Naive thymus-derived CD4-positive, alpha-beta T cell (primary cell): ENCODE measurements at regions of chr9 and their contacts with region 1.

Region 1: DNA sequence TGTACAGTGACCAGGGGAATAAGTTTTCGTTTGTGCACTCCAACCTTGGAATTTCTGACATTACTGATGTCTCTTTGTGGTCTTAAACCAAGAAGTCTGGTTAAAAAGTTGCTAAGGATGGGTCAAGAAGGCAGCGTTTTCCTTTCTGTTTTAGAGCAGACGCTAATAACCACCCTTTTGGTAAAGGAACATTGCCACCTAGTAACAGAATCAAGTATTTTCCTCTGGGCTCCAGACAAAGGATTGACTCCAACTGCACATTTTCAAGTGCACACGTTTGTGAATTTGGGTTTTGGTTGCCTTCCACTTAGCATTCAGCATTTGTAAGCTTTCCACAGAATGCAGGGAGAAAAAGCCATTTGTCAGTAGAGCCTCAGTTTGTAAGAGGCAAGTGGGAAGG is 22.2 kb upstream of the CEP78 start:
- DNase-seq: peak in 6 of 9 donors; percentile 12 to 54 (median 40)
- ATAC-seq: peak; percentile 65
- H3K4me3 ChIP-seq: no peak overlapping the region
- H3K4me3 Mint-ChIP-seq: peak overlapping the region in 3 of 10 donors; percentile 16 to 61 (median 46)
- H3K27ac ChIP-seq: no peak overlapping the region
- H3K27ac Mint-ChIP-seq: peak overlapping the region in 4 of 9 donors; percentile 30 to 89 (median 74)
- H3K4me1 ChIP-seq: peaks cover 34 to 38% of the 10 kb centered on the region in 2 donors
- H3K4me1 Mint-ChIP-seq: peaks cover 17 to 51% (median 44%) of the 10 kb centered on the region in 7 donors
- H3K27me3 ChIP-seq: no peaks in the 10 kb centered on the region
- H3K27me3 Mint-ChIP-seq: peaks cover 0 to under 1% (median 0%) of the 10 kb centered on the region in 5 donors

Region 2: DNA sequence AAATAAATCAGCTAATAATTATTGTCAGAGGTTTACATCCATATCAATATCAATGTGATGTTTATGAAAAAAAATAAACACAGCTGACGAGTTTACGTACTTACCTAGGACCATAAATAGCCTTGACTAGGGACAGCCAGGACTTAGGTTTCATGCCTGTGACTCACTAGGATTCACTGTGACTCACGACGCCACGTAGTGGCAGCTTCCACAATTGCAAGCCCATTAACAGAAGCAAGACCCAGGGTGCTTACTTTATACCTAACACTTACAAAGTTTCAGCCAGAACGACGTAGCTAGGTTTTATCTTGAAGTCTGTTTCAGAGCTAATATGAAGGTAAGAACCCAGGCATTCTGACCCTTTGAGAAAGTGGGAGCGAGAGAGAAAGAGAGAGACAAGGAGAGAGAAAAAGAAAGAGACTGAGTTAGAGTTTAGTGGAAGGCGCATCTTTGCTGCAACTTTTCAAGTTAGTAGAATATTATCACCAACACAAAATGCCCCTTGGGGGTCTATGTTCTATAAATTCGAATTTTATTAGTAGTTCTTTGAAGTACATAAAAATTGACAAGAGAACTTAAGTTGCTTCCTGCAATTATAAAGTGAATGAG is 756.8 kb before region 1 on chr9:
- CTCF ChIA-PET with region 1: interaction called, 7 read pairs
- POLR2A ChIA-PET with region 1: no interaction called
- intact Hi-C with region 1: loop called (anchors 1 to 10 kb)
- DNase-seq: peak; percentile 43 to 77 (median 68)
- ATAC-seq: peak; percentile 83
- H3K4me3 ChIP-seq: no peak overlapping the region
- H3K4me3 Mint-ChIP-seq: no peak overlapping the region
- H3K27ac ChIP-seq: no peak overlapping the region
- H3K27ac Mint-ChIP-seq: no peak overlapping the region
- H3K4me1 ChIP-seq: no peaks in the 10 kb centered on the region
- H3K4me1 Mint-ChIP-seq: peaks cover 9 to 30% (median 24%) of the 10 kb centered on the region in 7 donors
- H3K27me3 ChIP-seq: no peaks in the 10 kb centered on the region
- H3K27me3 Mint-ChIP-seq: no peaks in the 10 kb centered on the region

Region 3: DNA sequence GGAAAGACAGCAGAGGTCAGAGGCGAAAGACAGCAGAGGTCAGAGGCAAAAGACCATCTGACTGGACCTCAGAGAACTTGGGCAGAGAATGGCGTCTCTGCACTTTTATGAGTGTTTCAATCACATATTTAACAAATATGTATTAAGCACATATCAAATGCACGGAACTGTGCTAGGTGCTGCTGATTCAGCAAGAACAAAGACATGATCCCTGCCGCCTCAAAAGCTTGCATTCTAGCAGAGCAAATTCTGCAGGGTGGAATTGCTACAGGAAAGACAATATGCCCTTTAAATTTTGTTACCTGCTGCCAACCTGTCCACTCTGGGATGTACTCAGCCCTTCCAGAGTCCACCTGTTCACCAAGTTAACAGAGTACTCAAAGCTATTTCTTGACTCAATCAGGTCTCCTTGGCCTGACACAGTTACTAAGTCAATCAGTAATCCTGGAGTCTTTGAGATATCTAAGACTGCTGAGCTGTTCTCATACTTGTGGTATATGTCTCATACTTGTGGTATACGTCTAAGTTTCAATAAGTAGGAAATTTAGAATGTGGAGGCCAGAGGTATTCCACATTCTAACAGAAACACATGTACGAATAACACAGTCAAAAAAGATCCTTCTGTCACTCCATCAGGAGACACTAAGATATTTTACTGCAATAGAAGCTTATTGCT is 313.9 kb before region 1 on chr9:
- CTCF ChIA-PET with region 1: no interaction called
- POLR2A ChIA-PET with region 1: no interaction called
- intact Hi-C with region 1: loop called in 1 of 2 experiments (anchors 10 kb)
- DNase-seq: no peak
- ATAC-seq: no peak
- H3K4me3 ChIP-seq: no peak overlapping the region
- H3K4me3 Mint-ChIP-seq: no peak overlapping the region
- H3K27ac ChIP-seq: no peak overlapping the region
- H3K27ac Mint-ChIP-seq: no peak overlapping the region
- H3K4me1 ChIP-seq: no peaks in the 10 kb centered on the region
- H3K4me1 Mint-ChIP-seq: peaks cover 17 to 55% (median 30%) of the 10 kb centered on the region in 7 donors
- H3K27me3 ChIP-seq: no peaks in the 10 kb centered on the region
- H3K27me3 Mint-ChIP-seq: no peaks in the 10 kb centered on the region

Region 4: GRCh38 chr9:78053627-78054026 is 160.1 kb before region 1 on chr9:
- CTCF ChIA-PET with region 1: no interaction called
- POLR2A ChIA-PET with region 1: no interaction called
- intact Hi-C with region 1: loop called in 1 of 2 experiments (anchors 5 kb)
- DNase-seq: no peak
- ATAC-seq: peak; percentile 31
- H3K4me3 ChIP-seq: no peak overlapping the region
- H3K4me3 Mint-ChIP-seq: peak overlapping the region in 7 of 10 donors; percentile 19 to 69 (median 47)
- H3K27ac ChIP-seq: no peak overlapping the region
- H3K27ac Mint-ChIP-seq: peak overlapping the region in 2 of 9 donors; percentile 7 to 48
- H3K4me1 ChIP-seq: peaks cover 14 to 16% of the 10 kb centered on the region in 2 donors
- H3K4me1 Mint-ChIP-seq: peaks cover 15 to 41% (median 25%) of the 10 kb centered on the region in 7 donors
- H3K27me3 ChIP-seq: no peaks in the 10 kb centered on the region
- H3K27me3 Mint-ChIP-seq: peaks cover 0 to 42% (median 0%) of the 10 kb centered on the region in 5 donors

Region 5: DNA sequence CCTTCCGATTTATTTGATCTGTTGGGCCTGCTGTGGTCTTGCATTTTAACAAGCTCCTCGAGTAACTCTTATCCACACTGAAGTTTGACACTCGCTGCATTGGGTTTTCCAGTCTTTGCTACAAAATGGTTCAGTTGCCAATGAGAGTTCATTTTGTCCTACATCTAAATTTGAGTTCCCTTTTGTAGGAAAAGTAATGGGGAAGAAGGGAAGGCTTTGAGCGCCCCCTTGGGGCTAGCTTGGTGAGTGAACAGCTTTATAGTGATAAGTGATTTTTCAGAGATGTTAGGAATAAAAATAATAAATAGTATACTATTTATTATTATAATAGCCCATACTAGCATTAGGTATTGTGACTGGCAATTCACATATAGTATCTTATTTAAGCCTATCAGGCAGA is 92.2 kb before region 1 on chr9:
- CTCF ChIA-PET with region 1: interaction called, 12 read pairs
- POLR2A ChIA-PET with region 1: no interaction called
- intact Hi-C with region 1: loop called (anchors 1 to 5 kb)
- DNase-seq: peak in 7 of 9 donors; percentile 24 to 55 (median 37)
- ATAC-seq: peak; percentile 44
- H3K4me3 ChIP-seq: no peak overlapping the region
- H3K4me3 Mint-ChIP-seq: no peak overlapping the region
- H3K27ac ChIP-seq: no peak overlapping the region
- H3K27ac Mint-ChIP-seq: peak overlapping the region in 3 of 9 donors; percentile 44 to 94 (median 59)
- H3K4me1 ChIP-seq: peaks cover 17 to 32% of the 10 kb centered on the region in 2 donors
- H3K4me1 Mint-ChIP-seq: peaks cover 27 to 55% (median 47%) of the 10 kb centered on the region in 7 donors
- H3K27me3 ChIP-seq: no peaks in the 10 kb centered on the region
- H3K27me3 Mint-ChIP-seq: peaks cover 0 to 15% (median 0%) of the 10 kb centered on the region in 5 donors

Region 6: DNA sequence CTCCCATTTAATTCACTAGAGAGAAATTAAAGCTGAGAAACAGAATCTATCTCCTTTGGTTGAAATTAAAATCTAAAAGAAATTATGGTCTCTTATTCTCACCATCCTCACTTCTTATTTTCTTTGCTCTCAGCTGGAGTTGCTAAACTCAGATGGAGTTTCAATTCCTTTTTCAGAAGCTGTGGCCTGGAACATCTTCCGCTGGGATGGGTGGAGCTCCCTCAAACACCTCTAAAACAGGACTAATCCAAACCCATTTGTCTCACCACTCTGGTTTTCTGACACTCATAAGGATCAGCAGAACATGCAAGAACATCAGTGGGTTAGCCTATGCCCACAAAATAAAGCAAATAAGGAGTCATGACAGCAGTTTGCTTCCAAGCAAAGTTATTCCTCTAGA is 17.5 kb before region 1 on chr9:
- CTCF ChIA-PET with region 1: interaction called, 8 read pairs
- POLR2A ChIA-PET with region 1: interaction called, 28 read pairs
- intact Hi-C with region 1: loop called in 1 of 2 experiments (anchors 1 kb)
- DNase-seq: no peak
- ATAC-seq: peak; percentile 32
- H3K4me3 ChIP-seq: no peak overlapping the region
- H3K4me3 Mint-ChIP-seq: no peak overlapping the region
- H3K27ac ChIP-seq: no peak overlapping the region
- H3K27ac Mint-ChIP-seq: peak overlapping the region in 4 of 9 donors; percentile 3 to 70 (median 16)
- H3K4me1 ChIP-seq: peaks cover 9 to 11% of the 10 kb centered on the region in 2 donors
- H3K4me1 Mint-ChIP-seq: peaks cover 12 to 25% (median 20%) of the 10 kb centered on the region in 7 donors
- H3K27me3 ChIP-seq: no peaks in the 10 kb centered on the region
- H3K27me3 Mint-ChIP-seq: peaks cover 0 to 13% (median 0%) of the 10 kb centered on the region in 5 donors